H1 (cell line): ENCODE measurements at regions of chr19 and their contacts with region 1.

Region 1: GRCh38 chr19:49929611-49930482 is 543 bp upstream of the NUP62 start:
- DNase-seq: peak; percentile 96 to 97
- H3K4me3 ChIP-seq: peak overlapping the region; percentile 71 to 91 (median 86)
- H3K27ac ChIP-seq: peak overlapping the region; percentile 96
- H3K4me1 ChIP-seq: peaks cover 0 to 5% (median under 1%) of the 10 kb centered on the region in 4 experiments; a peak in 3 of 7 replicates
- H3K27me3 ChIP-seq: no peaks in the 10 kb centered on the region
- CTCF ChIP-seq: no peak
- EP300 ChIP-seq: no peak
- POLR2A ChIP-seq: peak; percentile 97 to 99
- RAD21 ChIP-seq: no peak

Region 2: GRCh38 chr19:49712397-49712859 is 217.4 kb before region 1 on chr19:
- CTCF ChIA-PET with region 1: no interaction called
- POLR2A ChIA-PET with region 1: no interaction called
- DNase-seq: peak; percentile 74 to 92
- H3K4me3 ChIP-seq: no peak overlapping the region
- H3K27ac ChIP-seq: no peak overlapping the region
- H3K4me1 ChIP-seq: no peaks in the 10 kb centered on the region; a peak in 1 of 7 replicates
- H3K27me3 ChIP-seq: no peaks in the 10 kb centered on the region
- CTCF ChIP-seq: no peak
- EP300 ChIP-seq: no peak
- POLR2A ChIP-seq: no peak
- RAD21 ChIP-seq: no peak

Region 3: DNA sequence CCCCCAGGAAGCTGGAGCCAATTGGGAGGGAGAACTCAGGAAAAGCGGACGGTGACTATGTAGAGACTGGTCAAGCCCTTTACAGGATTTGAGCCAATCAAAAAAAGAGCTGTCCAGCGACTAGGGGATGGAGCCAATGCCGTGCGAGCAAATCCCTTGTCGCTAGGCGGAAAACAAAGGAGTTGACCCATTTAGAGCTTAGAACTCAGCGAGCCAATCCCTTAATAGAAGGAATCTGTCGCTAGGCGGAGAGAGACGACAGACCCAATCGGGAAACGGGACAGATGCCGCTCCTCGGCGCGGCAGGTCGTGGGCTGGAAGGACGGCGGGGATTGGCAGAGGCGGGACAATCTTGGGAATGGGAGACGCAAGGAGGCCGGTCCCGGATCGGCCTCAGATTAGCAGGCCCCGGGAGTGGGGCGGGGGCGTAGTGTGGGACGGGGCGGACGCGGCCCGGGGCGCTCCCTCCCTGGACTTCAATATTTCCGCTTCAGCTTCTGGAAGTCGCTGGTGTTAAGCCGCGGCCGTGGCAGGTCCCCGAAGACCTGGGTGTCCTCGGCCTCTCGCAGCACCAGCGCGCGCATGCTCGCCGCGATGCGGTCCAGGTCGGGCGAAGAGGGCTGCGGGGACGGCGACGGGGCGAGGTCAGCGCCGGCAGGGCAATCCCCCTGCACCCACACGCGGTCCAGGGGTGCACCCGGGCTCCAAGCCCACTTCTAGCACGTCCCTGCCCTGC is 60.2 kb before region 1 on chr19:
- CTCF ChIA-PET with region 1: no interaction called
- POLR2A ChIA-PET with region 1: interaction called, 39 read pairs
- DNase-seq: peak; percentile 98 to 99
- H3K4me3 ChIP-seq: peak overlapping the region; percentile 45 to 70 (median 56)
- H3K27ac ChIP-seq: peak overlapping the region; percentile 77
- H3K4me1 ChIP-seq: peaks cover 0 to 12% (median 5%) of the 10 kb centered on the region in 4 experiments; a peak in 5 of 7 replicates
- H3K27me3 ChIP-seq: no peaks in the 10 kb centered on the region
- CTCF ChIP-seq: no peak
- EP300 ChIP-seq: no peak
- POLR2A ChIP-seq: peak in 1 of 2 experiments; percentile 87; a peak in 2 of 3 replicates
- RAD21 ChIP-seq: no peak

Region 4: DNA sequence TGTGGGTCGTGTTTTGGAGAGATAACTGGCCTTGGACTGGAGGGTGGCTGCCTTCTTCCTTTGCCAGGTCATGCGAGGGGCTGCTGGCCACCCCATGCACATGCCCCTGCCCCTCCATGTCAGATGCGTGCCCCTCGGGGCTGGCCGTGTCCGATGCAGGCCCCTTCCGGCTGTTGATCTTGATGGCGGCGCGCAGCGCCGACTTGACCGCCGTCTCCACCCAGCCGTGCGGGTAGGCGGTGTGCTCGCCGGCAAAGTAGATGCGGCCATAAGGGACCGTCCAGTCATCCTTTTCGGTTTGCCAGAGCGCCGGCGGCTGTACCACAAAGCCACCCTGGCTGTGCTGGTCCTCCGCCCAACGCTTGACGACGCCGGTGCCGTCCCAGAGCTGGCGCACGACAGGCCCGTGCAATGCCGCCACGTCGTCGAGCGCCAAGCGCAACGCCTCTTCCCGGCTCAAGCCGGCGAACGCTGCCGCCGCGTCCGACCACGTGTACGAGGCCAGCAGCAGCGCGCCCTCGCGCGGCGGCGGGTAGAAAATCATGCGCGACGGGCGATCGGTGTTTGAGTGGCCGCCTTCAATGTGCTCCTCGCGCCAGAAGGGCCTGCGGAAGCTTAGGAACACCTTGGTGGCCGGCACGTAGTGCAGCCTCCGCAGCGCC is 40.0 kb before region 1 on chr19:
- CTCF ChIA-PET with region 1: no interaction called
- POLR2A ChIA-PET with region 1: interaction called, 82 read pairs
- DNase-seq: peak; percentile 88 to 94
- H3K4me3 ChIP-seq: peak overlapping the region; percentile 35 to 61 (median 42); a peak in 7 of 8 replicates
- H3K27ac ChIP-seq: no peak overlapping the region
- H3K4me1 ChIP-seq: peaks cover 0 to 10% (median 8%) of the 10 kb centered on the region in 4 experiments; a peak in 5 of 7 replicates
- H3K27me3 ChIP-seq: peaks cover 0 to 11% (median 6%) of the 10 kb centered on the region in 4 experiments; a peak in 4 of 7 replicates
- CTCF ChIP-seq: peak; percentile 77 to 94 (median 87)
- EP300 ChIP-seq: peak in 1 of 2 experiments; percentile 47; a peak in 1 of 3 replicates
- POLR2A ChIP-seq: no peak
- RAD21 ChIP-seq: peak; percentile 18 to 45; a peak in 3 of 4 replicates

Region 5: GRCh38 chr19:49911381-49912145 is 18.3 kb before region 1 on chr19:
- CTCF ChIA-PET with region 1: interaction called, 18 read pairs
- POLR2A ChIA-PET with region 1: interaction called, 373 read pairs
- DNase-seq: no peak
- H3K4me3 ChIP-seq: no peak overlapping the region
- H3K27ac ChIP-seq: no peak overlapping the region
- H3K4me1 ChIP-seq: peaks cover 0 to 6% (median 3%) of the 10 kb centered on the region in 4 experiments; a peak in 3 of 7 replicates
- H3K27me3 ChIP-seq: no peaks in the 10 kb centered on the region; a peak in 1 of 7 replicates
- CTCF ChIP-seq: no peak
- EP300 ChIP-seq: no peak
- POLR2A ChIP-seq: peak in 1 of 2 experiments; percentile 68; a peak in 1 of 3 replicates
- RAD21 ChIP-seq: no peak

Region 6: DNA sequence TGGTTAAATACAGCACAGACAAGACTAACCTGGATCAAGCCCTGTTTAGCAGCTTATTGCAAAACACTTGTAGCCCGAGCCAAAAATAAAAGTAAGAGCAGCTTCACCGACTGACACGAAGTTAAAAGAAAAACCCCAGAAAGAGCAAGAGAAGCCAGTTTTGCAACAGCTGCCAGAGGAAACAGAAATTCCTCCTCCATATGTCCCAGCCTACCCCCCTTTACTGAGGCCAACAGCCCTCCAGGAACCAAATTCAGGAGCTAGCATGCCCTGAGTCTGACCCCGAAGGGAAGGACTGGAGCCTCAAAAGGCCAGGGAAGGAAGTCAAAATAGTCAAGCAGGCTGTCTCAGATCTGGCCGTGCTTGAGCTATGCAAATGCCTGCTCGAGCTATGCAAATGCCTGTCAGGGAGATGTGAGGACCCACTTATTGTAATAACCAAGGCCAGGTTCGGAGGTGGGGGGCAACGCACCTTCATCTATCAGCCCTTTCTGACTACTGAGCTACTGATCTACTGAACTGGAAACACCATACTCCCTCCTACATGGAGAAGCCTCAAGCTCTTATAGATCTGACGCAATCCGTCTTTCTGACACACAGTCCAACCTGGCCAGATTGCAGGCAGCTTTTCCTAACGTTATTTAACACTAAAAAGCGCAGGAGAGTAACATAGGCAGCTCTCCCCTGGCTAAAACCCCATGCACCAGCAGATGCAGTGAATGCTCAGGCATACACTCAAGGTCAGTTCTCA is 24.4 kb after region 1 on chr19:
- CTCF ChIA-PET with region 1: no interaction called
- POLR2A ChIA-PET with region 1: interaction called, 10 read pairs
- DNase-seq: no peak
- H3K4me3 ChIP-seq: no peak overlapping the region
- H3K27ac ChIP-seq: no peak overlapping the region
- H3K4me1 ChIP-seq: peaks cover 0 to 17% (median 9%) of the 10 kb centered on the region in 4 experiments; a peak in 6 of 7 replicates
- H3K27me3 ChIP-seq: no peaks in the 10 kb centered on the region
- CTCF ChIP-seq: no peak
- EP300 ChIP-seq: no peak
- POLR2A ChIP-seq: no peak
- RAD21 ChIP-seq: no peak

Region 7: GRCh38 chr19:49983645-49984229 is 53.9 kb after region 1 on chr19:
- CTCF ChIA-PET with region 1: interaction called, 231 read pairs
- POLR2A ChIA-PET with region 1: interaction called, 36 read pairs
- DNase-seq: peak in 1 of 2 experiments; percentile 88
- H3K4me3 ChIP-seq: no peak overlapping the region
- H3K27ac ChIP-seq: no peak overlapping the region
- H3K4me1 ChIP-seq: no peaks in the 10 kb centered on the region
- H3K27me3 ChIP-seq: no peaks in the 10 kb centered on the region
- CTCF ChIP-seq: peak; percentile 91 to 95 (median 93)
- EP300 ChIP-seq: no peak
- POLR2A ChIP-seq: no peak
- RAD21 ChIP-seq: peak; percentile 93 to 98